PC-9 (cell line): ENCODE measurements at regions of chr1 and their contacts with region 1.

Region 1: GRCh38 chr1:154206196-154206595 is at the start of gene CFAP141:
- DNase-seq: peak in 1 of 2 experiments; percentile 57
- H3K4me3 ChIP-seq: no peak within 1 kb of the TSS
- H3K27ac ChIP-seq: no peak within 1 kb of the TSS
- H3K4me1 ChIP-seq: no peaks in the 10 kb centered on the region
- H3K27me3 ChIP-seq: no peaks in the 10 kb centered on the region
- CTCF ChIP-seq: no peak
- total RNA-seq, gene CFAP141: not detected in 2 replicates

Region 2: GRCh38 chr1:153698020-153698931 is 507.9 kb before region 1 on chr1:
- CTCF ChIA-PET with region 1: no interaction called
- POLR2A ChIA-PET with region 1: no interaction called
- intact Hi-C with region 1: no loop called
- DNase-seq: no peak
- H3K4me3 ChIP-seq: no peak overlapping the region
- H3K27ac ChIP-seq: no peak overlapping the region
- H3K4me1 ChIP-seq: peaks cover 27% of the 10 kb centered on the region
- H3K27me3 ChIP-seq: no peaks in the 10 kb centered on the region
- CTCF ChIP-seq: no peak

Region 3: GRCh38 chr1:154237435-154237834 is 31.2 kb after region 1 on chr1:
- CTCF ChIA-PET with region 1: interaction called, 14 read pairs
- POLR2A ChIA-PET with region 1: no interaction called
- intact Hi-C with region 1: no loop called
- DNase-seq: no peak
- H3K4me3 ChIP-seq: no peak overlapping the region
- H3K27ac ChIP-seq: no peak overlapping the region
- H3K4me1 ChIP-seq: no peaks in the 10 kb centered on the region
- H3K27me3 ChIP-seq: no peaks in the 10 kb centered on the region
- CTCF ChIP-seq: no peak